Activated B cell treated with CpG ODN at 0.5 μM for 24 hours (primary cell): ENCODE measurements at regions of chr4 and their contacts with region 1.

Region 1: DNA sequence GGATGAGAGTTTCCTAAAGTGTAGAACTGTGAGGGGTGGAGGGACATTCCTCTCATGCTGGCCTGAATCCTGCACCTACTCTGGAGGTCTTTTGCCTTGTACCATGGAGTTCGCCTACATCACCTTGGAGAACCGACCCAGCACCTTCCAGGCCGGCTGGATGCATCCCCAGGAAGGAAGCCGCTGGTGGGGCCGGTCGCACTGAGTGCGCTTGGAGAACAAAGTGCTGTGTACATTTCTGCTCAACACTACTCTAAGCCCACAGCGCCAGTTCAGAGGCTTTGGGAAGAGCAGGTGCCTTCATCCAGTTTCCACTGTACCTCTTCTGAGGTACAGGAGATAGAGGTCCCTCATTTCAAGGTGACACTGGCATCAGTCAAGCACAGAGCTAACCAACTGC is 15.4 kb upstream of the IRF2 start:
- DNase-seq: no peak
- ATAC-seq: no peak
- H3K4me3 Mint-ChIP-seq: no peak overlapping the region
- H3K27ac Mint-ChIP-seq: no peak overlapping the region
- H3K4me1 Mint-ChIP-seq: peaks cover 20% of the 10 kb centered on the region
- H3K27me3 Mint-ChIP-seq: no peaks in the 10 kb centered on the region
- CTCF ChIP-seq: no peak

Region 2: GRCh38 chr4:182695842-182696241 is 1793.9 kb before region 1 on chr4:
- CTCF ChIA-PET with region 1: no interaction called
- POLR2A ChIA-PET with region 1: no interaction called
- intact Hi-C with region 1: no loop called
- DNase-seq: no peak
- ATAC-seq: no peak
- H3K4me3 Mint-ChIP-seq: no peak overlapping the region
- H3K27ac Mint-ChIP-seq: no peak overlapping the region
- H3K4me1 Mint-ChIP-seq: no peaks in the 10 kb centered on the region
- H3K27me3 Mint-ChIP-seq: peaks cover 3% of the 10 kb centered on the region
- CTCF ChIP-seq: no peak

Region 3: DNA sequence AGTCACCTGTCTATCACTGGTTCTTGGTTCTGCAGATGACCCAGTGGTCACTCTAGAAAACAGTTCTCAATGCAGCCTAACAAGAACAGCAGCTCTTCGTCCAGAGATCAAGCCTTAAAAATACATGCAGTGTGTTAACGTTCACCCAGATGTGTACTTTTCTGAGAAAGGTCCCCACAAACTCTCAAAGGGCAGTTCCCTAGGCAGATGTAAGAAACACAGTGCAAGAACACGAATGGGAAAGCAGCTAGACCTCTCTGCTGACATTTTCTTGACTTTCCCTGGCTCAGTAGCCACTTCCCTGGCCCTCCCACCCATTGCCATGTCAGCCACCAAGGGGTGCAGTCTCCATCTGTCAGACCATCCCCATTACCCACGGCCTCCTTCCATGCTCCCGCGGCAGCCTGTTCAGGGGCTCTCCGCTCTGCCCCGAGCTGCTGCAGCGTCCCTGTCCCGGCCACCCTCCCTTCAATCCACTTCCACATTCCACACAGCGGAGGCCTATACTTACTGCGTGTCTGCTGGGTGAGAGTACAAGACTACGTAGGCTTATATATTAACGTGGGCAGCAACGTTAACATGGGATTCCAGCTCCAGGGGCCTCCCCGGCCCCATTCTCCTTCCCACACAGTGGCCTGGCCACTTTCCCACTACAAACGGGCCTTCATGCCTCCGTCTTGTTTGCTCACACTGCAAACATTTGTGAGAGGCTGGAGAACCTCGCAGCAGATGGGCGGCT is 49.7 kb before region 1 on chr4:
- CTCF ChIA-PET with region 1: no interaction called
- POLR2A ChIA-PET with region 1: no interaction called
- intact Hi-C with region 1: no loop called
- DNase-seq: no peak
- ATAC-seq: no peak
- H3K4me3 Mint-ChIP-seq: no peak overlapping the region
- H3K27ac Mint-ChIP-seq: peak overlapping the region; percentile 36
- H3K4me1 Mint-ChIP-seq: peaks cover 89% of the 10 kb centered on the region
- H3K27me3 Mint-ChIP-seq: no peaks in the 10 kb centered on the region
- CTCF ChIP-seq: no peak

Region 4: GRCh38 chr4:184506527-184507121 is 16.9 kb after region 1 on chr4:
- CTCF ChIA-PET with region 1: interaction called, 6 read pairs
- POLR2A ChIA-PET with region 1: interaction called, 4 read pairs
- intact Hi-C with region 1: loop called (anchors 2 kb)
- DNase-seq: peak; percentile 38
- ATAC-seq: peak; percentile 98
- H3K4me3 Mint-ChIP-seq: peak overlapping the region; percentile 67
- H3K27ac Mint-ChIP-seq: peak overlapping the region; percentile 88
- H3K4me1 Mint-ChIP-seq: peaks cover 58% of the 10 kb centered on the region
- H3K27me3 Mint-ChIP-seq: no peaks in the 10 kb centered on the region
- CTCF ChIP-seq: no peak